AG04450 (cell line): ENCODE measurements at regions of chr3 and their contacts with region 1.

Region 1: GRCh38 chr3:27643355-27643754 is 78.8 kb downstream of the EOMES start:
- DNase-seq: no peak
- H3K4me3 ChIP-seq: no peak overlapping the region
- H3K27ac ChIP-seq: no peak overlapping the region
- H3K27me3 ChIP-seq: no peaks in the 10 kb centered on the region
- CTCF ChIP-seq: no peak

Region 2: DNA sequence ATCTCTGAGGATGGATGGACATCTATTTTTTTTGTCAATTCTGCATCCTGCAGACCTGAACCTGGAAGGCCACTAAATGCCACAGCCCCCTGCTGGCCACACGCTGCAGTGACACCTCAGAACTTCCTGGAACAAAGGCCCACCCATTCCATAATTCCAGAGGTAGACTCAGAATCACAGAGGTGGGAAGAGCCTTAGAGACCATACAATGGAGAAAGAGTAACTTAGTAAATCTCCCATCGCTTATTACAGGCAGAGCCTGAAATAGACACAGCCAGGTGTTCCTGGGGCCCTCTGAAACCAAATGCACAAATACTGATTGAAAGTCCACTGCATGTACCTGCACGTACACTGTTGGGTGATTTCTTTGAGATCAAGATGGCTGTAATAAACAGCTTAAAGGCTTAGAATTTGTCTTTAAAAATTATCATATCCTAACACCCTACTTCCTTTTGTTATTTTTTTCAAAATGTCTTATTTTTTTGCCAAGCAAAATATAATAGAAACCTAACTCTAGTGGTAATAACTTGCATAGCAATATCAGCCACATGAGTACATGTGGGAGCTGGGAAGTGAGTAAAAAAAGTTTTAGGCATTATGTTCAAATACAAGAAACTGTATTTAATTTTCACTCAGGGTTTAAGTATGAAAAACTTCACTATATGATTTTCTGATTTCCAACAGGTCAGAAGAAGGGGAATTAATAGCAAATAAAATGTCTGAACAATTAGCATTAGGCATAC is 16.1 kb after region 1 on chr3:
- CTCF ChIA-PET with region 1: interaction called, 10 read pairs
- POLR2A ChIA-PET with region 1: no interaction called
- DNase-seq: no peak
- H3K4me3 ChIP-seq: no peak overlapping the region
- H3K27ac ChIP-seq: no peak overlapping the region
- H3K27me3 ChIP-seq: no peaks in the 10 kb centered on the region
- CTCF ChIP-seq: peak; percentile 80

Region 3: DNA sequence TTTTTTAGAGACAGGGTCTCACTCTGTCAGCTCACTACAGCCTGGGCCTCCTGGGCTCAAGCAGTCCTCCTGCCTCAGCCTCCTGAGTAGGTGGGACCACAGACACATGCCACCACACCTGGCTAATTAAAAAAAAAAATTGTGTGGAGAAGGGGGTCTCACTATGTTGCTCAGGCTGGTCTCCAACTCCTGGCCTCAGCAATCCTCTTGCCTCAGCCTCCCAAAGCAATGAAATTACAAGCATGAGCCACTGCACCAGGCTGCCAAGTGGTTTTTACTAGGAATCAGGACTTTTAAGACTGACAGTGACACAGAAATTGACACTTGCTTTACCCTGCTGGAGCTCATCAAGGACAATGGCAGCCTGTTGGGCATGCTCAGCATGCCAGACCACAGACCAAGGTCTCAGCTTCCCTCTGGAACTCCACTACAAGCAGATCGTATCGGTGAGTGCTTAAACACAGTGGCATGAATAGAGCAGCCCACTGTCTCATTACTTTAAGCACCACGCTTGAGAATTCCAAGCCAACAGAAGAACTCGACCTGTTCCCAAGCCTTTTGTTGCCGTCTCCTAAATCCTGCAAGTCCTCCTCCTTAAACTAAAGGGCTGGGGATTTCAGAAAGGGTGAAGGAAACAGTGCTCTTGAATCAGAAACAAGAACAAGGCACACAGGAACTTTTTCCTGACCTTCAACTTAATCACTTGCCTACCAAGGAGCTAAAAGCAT is 37.3 kb after region 1 on chr3:
- CTCF ChIA-PET with region 1: no interaction called
- POLR2A ChIA-PET with region 1: no interaction called
- DNase-seq: no peak
- H3K4me3 ChIP-seq: no peak overlapping the region
- H3K27ac ChIP-seq: no peak overlapping the region
- H3K27me3 ChIP-seq: no peaks in the 10 kb centered on the region
- CTCF ChIP-seq: no peak